ENCODE measurements at regions of chr1 and their contacts with region 1.

Region 1: GRCh38 chr1:226736908-226737818 is 1.9 kb downstream of the ITPKB start:
- DNase-seq: peak; percentile 62
- H3K4me3 ChIP-seq: peak overlapping the region; percentile 86
- H3K27ac ChIP-seq: no peak overlapping the region
- H3K4me1 ChIP-seq: peaks cover 9% of the 10 kb centered on the region
- H3K27me3 ChIP-seq: no peaks in the 10 kb centered on the region
- CTCF ChIP-seq: peak; percentile 28

Region 2: DNA sequence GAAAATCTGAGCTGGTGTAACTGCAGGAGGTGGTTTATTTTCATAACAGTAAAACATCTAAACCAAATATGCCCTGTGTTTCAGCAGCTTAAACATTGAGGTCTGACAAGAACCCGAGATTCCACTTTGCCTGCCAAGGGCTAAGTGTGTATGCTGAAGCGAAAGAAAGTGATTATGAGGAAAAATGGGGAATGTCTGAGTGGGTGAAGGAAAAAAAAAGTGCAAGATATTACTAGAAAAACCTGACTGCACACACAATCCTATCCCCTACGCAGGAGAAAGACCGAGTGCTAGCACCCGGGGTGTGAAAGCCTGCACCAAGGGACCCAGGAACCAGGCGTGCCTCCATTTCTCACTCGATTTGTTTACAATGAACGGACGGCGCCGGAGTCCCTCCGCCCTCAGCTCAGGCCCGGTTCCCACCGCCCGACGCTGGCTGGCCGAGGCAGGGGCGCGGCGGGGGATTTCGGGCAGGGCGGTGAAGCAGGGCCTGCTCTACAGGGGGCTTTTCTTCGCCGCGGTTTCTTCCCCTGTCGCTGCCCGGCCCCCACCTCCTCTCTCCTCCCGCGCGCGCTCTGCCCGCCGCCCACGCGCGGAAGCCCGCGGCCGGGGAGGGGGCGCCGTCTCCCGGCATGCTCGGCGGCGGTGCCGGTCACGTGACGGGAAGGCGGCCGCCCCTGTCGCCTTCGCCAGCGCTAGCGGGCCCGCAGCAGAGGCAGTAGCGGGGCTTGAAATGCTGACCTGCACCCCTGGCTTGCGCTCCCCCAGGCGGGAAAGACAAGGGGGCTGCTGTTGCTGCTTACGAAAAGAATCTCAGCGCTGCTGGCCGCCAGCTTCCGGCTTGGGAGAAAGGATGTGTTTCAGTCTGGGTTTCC is 34.0 kb before region 1 on chr1:
- CTCF ChIA-PET with region 1: no interaction called
- POLR2A ChIA-PET with region 1: no interaction called
- intact Hi-C with region 1: loop called (anchors 1 kb)
- DNase-seq: peak; percentile 90
- H3K4me3 ChIP-seq: peak overlapping the region; percentile 59
- H3K27ac ChIP-seq: peak overlapping the region; percentile 92
- H3K4me1 ChIP-seq: peaks cover 26% of the 10 kb centered on the region
- H3K27me3 ChIP-seq: no peaks in the 10 kb centered on the region
- CTCF ChIP-seq: no peak

Region 3: GRCh38 chr1:226939438-226940028 is 202.4 kb after region 1 on chr1:
- CTCF ChIA-PET with region 1: no interaction called
- POLR2A ChIA-PET with region 1: no interaction called
- intact Hi-C with region 1: loop called (anchors 5 kb)
- DNase-seq: peak; percentile 69
- H3K4me3 ChIP-seq: peak overlapping the region; percentile 61
- H3K27ac ChIP-seq: peak overlapping the region; percentile 90
- H3K4me1 ChIP-seq: peaks cover 12% of the 10 kb centered on the region
- H3K27me3 ChIP-seq: no peaks in the 10 kb centered on the region
- CTCF ChIP-seq: no peak

Region 4: GRCh38 chr1:227185291-227185690 is 448.1 kb after region 1 on chr1:
- CTCF ChIA-PET with region 1: no interaction called
- POLR2A ChIA-PET with region 1: no interaction called
- intact Hi-C with region 1: no loop called
- DNase-seq: no peak
- H3K4me3 ChIP-seq: no peak overlapping the region
- H3K27ac ChIP-seq: no peak overlapping the region
- H3K4me1 ChIP-seq: no peaks in the 10 kb centered on the region
- H3K27me3 ChIP-seq: no peaks in the 10 kb centered on the region
- CTCF ChIP-seq: no peak